ENCODE measurements at regions of chr19 and their contacts with region 1.

Region 1: GRCh38 chr19:55339048-55339888 is at the start of gene KMT5C:
- DNase-seq: peak; percentile 100

Region 2: DNA sequence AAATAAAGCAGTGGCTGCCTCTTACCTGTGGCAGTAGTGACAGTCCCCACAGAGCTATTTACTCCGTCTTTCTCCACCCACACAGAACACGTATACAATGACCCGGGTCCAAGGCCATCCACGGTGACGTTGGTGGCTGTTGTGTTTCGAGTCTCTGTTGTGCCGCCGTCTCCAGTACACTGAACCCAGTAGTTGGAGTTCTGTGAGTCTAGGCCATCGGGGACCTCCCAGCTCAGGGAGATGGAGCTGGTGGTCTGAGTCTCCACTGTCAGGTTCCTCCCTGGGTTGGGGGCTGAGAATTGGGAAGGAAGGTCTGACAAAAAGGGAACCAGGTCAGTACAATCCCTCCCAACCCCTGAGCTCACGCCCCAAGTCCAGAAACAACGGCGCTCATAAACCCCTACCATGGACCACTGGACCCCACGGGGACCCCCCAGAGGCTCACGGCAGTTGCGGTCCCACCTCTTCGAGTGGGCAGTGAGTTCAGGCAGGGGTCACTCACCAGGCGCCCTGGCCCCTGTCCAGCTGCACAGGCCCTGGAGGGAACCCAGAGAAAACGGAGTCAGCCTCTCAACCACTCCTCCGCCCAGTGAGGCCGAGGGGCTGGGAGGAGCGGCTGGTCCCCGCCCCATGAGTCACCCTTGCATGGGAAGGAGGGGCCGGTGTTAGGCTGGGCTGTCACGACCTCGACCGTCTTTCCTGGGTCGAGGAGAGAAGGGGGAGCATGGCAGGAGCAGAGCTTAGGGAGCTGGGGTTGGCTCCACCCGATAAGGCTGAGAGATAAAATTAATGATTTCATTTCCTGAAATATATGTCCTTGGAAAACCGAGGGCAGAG is 132.4 kb before region 1 on chr19:
- intact Hi-C with region 1: no loop called
- DNase-seq: peak in 34 of 42 donors; percentile 22 to 82 (median 56)

Region 3: DNA sequence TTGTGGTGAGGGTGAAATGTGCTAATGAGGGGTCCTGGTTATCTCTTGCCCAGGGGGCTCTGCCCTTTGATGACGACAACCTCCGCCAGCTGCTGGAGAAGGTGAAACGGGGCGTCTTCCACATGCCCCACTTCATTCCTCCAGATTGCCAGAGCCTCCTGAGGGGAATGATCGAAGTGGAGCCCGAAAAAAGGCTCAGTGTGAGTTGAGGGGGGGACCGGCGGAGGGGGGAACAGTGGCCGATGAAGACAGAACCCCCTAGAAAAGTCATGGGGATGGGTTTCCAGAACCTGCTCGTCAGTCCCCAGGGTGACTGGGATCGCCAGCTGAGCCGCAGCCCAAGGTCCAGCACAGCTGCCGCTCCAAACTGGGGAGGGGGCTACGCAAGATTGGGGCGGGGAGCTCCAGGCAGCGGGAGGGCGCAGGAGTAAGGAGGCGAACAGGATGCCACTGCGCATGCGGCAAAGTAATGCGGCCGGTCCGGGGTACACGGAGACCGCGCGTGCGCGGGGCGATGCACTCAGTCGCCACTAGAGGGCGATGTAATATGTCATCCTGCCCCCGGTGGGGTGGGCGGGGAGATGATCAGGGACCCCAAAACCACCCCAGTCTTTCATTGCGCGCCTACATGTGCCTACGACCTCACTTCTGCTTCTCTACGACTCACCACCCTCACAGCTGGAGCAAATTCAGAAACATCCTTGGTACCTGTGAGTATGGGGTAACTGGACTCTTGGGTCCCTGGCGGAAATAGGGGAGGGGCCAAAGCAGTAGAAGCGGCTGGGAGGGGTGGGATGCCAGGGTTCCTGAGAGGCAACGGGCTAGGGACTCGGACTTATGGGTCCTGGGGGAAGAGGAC is 37.6 kb before region 1 on chr19:
- intact Hi-C with region 1: loop called (anchors 5 kb)
- DNase-seq: peak; percentile 77 to 96 (median 90)

Region 4: DNA sequence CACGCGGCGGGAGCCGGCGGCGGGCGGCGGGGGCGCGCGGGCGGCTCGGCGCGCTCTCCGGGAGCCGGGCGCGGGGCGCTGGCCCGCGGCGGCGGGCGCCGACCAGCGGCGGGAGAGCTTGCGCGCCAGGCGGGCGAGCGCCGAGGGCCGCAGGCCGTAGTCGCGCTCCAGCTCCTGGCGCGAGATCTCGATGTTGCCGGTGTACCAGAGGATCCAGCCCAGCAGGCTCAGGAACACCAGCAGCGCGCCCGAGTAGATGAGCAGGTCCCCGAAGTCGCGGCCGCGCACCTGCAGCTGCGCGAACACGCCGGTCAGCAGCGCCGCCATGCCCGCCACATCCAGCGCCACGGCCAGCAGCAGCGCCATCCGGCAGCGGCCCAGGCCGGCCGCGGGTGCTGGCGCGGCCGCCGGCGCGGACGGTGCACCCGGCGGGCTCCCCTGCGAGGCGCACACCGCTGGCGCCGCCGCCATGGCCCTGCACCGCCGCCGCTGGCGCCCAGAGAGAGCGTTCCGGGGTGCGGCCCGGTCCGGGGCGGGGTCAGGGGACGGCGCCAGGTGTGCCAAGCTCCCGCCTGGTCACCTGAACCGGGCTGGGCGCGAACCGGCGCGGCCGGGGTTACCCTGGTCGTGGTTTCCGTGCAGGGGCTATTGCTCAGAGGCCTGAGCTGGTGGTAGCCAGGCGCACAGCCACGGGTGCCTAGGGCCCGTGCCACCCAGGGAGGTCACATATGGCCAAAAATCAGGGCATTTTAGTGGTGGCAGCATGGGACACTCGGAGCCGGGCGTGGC is 44.7 kb after region 1 on chr19 and contains the start of gene TMEM238:
- intact Hi-C with region 1: loop called (anchors 5 kb)
- DNase-seq: peak in 41 of 42 donors; percentile 27 to 73 (median 52)